GM23248 (cell line): ENCODE measurements at regions of chr5 and their contacts with region 1.

Region 1: DNA sequence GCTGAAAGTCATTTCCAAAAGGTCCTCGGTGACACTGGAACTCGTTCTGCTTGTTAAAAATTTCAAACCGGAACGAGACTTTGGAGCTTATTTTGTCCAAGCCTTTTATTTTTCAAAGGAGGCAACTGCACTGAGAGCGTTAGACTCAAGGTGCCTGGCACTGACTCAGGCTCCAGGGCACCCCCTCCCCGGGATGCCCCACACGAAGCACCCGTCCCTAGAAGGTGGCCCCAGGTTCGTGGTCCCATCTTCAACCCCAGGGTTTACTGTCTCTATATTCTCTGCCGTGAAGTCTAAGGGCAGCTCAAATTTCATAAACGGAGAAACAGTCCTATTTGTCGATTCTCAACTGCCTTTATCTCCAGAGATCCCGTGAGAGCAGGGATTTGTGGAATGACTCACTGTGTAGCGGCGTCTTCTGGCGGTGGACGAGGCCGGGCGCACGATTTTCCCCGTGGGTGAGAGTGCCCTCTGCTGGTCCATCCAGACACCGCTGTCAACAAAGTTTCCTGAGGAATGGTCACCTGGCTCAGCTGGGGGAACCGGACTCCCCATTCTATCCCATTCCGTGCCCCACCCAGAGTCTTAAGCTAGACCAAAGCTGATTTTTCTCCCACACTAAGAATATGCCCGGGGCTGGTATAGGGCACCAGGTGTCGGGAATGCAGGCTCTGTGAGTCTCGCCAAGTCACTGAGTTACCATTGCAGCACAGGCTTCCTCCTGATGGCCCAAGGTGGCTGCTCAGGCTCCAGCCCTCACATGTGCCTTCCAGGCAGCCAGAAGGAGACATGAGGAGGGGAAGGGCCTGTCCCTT is 27.1 kb upstream of the SLC6A19 start:
- DNase-seq: peak; percentile 93
- H3K4me3 ChIP-seq: peak overlapping the region; percentile 55
- H3K27ac ChIP-seq: no peak overlapping the region
- H3K4me1 ChIP-seq: peaks cover 3% of the 10 kb centered on the region; the same call in 1 of the 2 replicates
- H3K27me3 ChIP-seq: no peaks in the 10 kb centered on the region

Region 2: GRCh38 chr5:759111-759751 is 415.1 kb before region 1 on chr5:
- in situ Hi-C with region 1: no loop called
- DNase-seq: peak; percentile 39
- H3K4me3 ChIP-seq: no peak overlapping the region
- H3K27ac ChIP-seq: no peak overlapping the region
- H3K4me1 ChIP-seq: no peaks in the 10 kb centered on the region
- H3K27me3 ChIP-seq: peaks cover 18% of the 10 kb centered on the region

Region 3: DNA sequence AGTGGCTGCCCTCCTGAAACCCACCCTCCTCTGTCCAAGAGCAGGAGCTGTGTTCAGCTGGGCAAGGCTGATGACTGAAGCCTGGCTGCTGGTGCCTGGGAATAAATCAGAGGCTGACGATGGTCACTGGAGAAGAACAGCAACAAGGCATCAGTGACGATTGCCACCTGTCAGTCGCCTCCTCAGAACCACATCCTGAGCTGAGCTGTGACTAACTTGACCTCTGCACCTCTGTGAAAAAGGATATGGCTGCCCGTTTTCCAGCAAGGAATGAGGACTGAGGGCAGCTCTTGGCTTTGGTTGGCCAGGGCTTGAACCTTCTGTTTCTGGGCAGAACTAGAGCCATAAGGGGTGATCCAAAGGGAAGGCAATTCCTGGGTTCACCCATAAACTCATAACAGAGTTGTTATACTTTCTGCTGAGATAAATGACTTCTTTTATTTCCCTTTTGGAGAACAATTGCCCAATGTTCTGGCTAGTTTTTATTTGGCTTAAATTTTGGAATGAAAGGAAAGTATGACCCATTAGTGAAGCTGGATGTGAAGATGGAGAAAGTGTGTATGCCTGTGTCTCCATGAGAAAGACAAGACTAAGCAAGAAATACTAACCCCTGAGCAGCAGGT is 241.6 kb before region 1 on chr5:
- in situ Hi-C with region 1: loop called (anchors 10 kb)
- DNase-seq: peak; percentile 19
- H3K4me3 ChIP-seq: no peak overlapping the region
- H3K27ac ChIP-seq: no peak overlapping the region
- H3K4me1 ChIP-seq: no peaks in the 10 kb centered on the region
- H3K27me3 ChIP-seq: peaks cover 24% of the 10 kb centered on the region

Region 4: GRCh38 chr5:1641560-1642166 is 467.3 kb after region 1 on chr5:
- in situ Hi-C with region 1: loop called (anchors 10 kb)
- DNase-seq: peak; percentile 96
- H3K4me3 ChIP-seq: peak overlapping the region; percentile 30
- H3K27ac ChIP-seq: no peak overlapping the region
- H3K4me1 ChIP-seq: peaks cover 3% of the 10 kb centered on the region; the same call in 1 of the 2 replicates
- H3K27me3 ChIP-seq: peaks cover 11% of the 10 kb centered on the region